Activated CD4-positive, alpha-beta memory T cell treated with anti-CD3 and anti-CD28 coated beads, Interleukin-2, amount 10 ng/mL, durations not matched to agents 7 days and 5 days (primary cell): ENCODE measurements at regions of chr1 and their contacts with region 1.

Region 1: DNA sequence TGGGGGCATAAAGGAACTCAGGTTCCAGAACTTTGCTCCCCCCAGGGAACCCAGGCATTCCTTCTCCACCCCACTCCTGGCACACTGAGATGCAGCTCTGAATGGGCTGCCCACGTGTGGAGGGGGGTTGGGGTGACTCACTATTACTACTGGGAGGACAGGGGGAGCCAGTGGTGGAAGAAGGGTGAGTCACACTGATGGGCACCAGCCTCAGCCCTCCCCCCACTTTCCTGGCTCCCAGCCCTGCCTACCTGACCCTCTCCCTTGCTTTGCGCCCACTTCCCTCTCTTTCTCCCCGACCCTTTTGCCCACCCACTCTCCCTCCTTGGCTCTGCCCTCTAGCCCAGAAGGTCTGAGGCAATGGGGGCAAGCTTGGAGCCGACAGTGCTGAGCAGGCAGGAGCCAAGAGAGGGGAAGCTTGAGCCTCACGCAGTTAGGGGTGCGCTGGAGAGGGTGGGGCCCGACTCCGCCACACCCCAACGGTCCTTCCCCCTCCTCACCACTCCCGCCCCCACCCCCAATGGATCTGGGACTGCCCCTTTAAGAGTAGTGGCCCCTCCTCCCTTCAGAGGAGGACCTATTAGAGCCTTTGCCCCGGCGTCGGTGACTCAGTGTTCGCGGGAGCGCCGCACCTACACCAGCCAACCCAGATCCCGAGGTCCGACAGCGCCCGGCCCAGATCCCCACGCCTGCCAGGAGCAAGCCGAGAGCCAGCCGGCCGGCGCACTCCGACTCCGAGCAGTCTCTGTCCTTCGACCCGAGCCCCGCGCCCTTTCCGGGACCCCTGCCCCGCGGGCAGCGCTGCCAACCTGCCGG is at the start of gene LMNA:
- DNase-seq: peak; percentile 77
- H3K4me3 Mint-ChIP-seq: peak within 1 kb of the TSS; percentile 95
- H3K27ac Mint-ChIP-seq: peak within 1 kb of the TSS; percentile 82
- H3K4me1 Mint-ChIP-seq: peaks cover 46% of the 10 kb centered on the region
- H3K27me3 Mint-ChIP-seq: peaks cover 17% of the 10 kb centered on the region
- total RNA-seq, gene LMNA: 93.6 to 101 TPM

Region 2: GRCh38 chr1:156096640-156097391 is 17.5 kb before region 1 on chr1:
- CTCF ChIA-PET with region 1: interaction called, 86 read pairs
- POLR2A ChIA-PET with region 1: interaction called, 73 read pairs
- DNase-seq: peak; percentile 88
- H3K4me3 Mint-ChIP-seq: peak overlapping the region; percentile 25
- H3K27ac Mint-ChIP-seq: peak overlapping the region; percentile 83
- H3K4me1 Mint-ChIP-seq: peaks cover 42% of the 10 kb centered on the region
- H3K27me3 Mint-ChIP-seq: peaks cover 13% of the 10 kb centered on the region

Region 3: GRCh38 chr1:156104065-156104810 is 10.1 kb before region 1 on chr1:
- CTCF ChIA-PET with region 1: interaction called, 86 read pairs
- POLR2A ChIA-PET with region 1: interaction called, 73 read pairs
- DNase-seq: peak; percentile 41
- H3K4me3 Mint-ChIP-seq: no peak overlapping the region
- H3K27ac Mint-ChIP-seq: peak overlapping the region; percentile 50
- H3K4me1 Mint-ChIP-seq: peaks cover 48% of the 10 kb centered on the region
- H3K27me3 Mint-ChIP-seq: peaks cover 6% of the 10 kb centered on the region

Region 4: DNA sequence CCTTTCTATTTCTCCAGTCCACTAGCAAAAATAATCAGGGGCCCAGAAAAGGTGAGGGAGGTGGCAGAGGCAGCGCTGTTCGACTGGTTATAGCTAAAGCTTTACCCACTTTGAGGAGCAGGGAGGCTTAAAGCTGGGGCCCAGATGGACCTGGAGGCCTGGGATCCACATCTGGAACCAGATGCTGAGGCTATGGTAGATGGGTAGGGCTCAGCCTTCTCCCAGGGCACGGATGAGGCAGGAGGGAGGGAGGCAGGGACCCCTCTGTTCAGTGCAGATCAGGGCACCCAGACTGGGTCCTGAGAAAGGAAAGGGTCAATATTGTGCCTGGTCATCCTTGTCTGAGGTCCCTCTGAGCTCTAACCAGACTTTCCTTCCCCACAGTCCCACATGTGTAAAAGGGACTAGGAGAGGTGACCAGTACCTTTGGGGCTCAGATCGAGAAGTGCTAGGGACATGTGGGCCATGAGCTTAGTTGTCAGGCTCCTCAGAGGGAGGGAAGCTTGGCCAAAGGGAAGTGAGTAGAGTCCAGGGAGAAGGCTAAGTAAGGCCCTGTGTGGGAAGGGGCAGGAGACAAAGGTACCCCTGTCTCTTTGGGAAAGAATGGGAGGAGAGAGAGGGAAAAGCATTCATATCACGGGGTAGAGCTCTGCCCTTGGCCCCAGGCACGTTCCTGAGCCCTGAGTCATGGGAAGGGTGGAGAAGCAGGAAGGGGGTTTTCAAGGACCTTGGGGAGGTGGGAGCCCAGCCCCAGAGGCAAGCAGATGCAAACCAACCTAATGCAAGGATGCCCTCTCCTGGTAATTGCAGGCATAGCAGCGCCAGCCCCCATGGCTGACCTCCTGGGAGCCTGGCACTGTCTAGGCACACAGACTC is 15.6 kb after region 1 on chr1:
- CTCF ChIA-PET with region 1: interaction called, 98 read pairs
- POLR2A ChIA-PET with region 1: interaction called, 111 read pairs
- DNase-seq: peak; percentile 83
- H3K4me3 Mint-ChIP-seq: no peak overlapping the region
- H3K27ac Mint-ChIP-seq: no peak overlapping the region
- H3K4me1 Mint-ChIP-seq: peaks cover 53% of the 10 kb centered on the region
- H3K27me3 Mint-ChIP-seq: no peaks in the 10 kb centered on the region

Region 5: DNA sequence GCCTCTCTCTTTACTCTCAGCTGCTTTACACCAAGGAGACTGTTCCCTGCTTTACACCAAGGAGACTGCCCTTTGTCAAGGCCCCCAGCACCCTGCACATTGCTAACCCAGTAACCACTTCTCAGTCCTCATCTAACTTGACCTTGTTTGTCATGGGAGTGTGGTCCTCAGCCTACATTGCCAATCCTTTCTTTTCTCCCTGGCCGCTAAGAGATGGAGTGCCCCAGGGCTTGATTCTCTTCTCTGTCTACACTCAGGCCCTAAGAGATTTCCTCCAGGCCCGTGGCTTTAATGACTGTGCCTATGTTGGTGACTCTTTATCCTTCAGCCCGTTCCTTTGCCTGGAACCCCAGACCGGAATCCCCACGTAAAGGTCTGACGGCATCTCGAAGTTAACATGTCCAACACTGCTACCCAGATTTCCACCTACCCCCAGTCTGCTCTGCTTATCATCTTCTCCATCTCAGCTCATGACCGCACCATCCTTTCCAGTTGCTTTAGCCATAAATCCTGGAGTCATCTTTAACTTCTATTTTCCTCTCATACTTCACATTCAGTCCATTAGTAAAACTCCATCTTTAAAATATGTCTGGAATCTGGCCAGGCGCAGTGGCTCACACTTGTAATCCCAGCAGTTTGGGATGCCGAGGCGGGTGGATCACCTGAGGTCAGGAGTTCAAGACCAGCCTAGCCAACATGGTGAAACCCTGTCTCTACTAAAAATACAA is 29.6 kb after region 1 on chr1:
- CTCF ChIA-PET with region 1: no interaction called
- POLR2A ChIA-PET with region 1: no interaction called
- DNase-seq: no peak
- H3K4me3 Mint-ChIP-seq: no peak overlapping the region
- H3K27ac Mint-ChIP-seq: no peak overlapping the region
- H3K4me1 Mint-ChIP-seq: peaks cover 26% of the 10 kb centered on the region
- H3K27me3 Mint-ChIP-seq: no peaks in the 10 kb centered on the region